ENCODE measurements at regions of chr15 and their contacts with region 1.

Region 1: DNA sequence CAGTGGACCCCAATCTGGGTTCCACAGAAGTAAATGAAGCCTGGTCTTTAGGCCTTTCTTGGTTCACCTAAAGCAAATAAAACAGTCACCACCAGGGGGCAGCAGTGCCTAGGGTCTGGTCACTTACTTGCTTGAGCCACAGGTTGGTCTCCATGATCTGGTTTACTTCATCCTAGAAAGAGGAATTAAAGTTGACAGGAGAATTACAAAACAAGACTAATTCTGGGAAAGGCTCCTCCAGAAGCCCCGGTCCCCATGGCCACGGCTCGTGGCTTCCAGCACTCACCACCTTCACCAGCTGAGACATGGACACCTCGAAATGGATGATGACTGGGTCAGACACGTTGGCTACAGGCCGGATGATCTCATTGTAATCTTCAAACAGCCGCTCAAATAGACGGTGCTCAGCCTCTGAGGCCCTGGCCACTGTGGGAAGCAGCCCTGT is 2.3 kb downstream of the CHRNA3 start:
- DNase-seq: peak; percentile 92

Region 2: DNA sequence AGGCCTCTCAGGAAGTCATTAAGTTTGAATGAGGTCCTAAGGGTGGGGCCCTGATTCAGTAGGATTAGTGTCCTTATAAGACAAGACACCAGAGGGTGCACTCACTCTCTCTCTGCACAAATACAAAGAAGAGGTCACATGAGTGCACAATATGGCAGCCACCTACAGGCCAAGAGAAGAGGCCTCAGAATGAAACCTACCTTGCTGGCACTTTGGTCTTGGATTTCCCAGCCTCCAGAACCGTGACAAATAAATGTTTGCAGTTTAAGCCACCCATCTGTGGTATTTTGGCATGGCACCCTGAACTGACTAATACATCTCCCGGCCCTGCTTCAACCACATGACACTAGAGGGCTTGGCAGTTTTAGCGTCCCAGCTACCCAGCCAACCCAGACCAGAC is 96.4 kb after region 1 on chr15:
- intact Hi-C with region 1: loop called (anchors 2 to 5 kb)
- DNase-seq: no peak

Region 3: GRCh38 chr15:78750566-78750965 is 132.1 kb after region 1 on chr15:
- intact Hi-C with region 1: loop called in 1 of 2 experiments (anchors 5 kb)
- DNase-seq: peak; percentile 56